Calu3 (cell line): ENCODE measurements at regions of chr15 and their contacts with region 1.

Region 1: DNA sequence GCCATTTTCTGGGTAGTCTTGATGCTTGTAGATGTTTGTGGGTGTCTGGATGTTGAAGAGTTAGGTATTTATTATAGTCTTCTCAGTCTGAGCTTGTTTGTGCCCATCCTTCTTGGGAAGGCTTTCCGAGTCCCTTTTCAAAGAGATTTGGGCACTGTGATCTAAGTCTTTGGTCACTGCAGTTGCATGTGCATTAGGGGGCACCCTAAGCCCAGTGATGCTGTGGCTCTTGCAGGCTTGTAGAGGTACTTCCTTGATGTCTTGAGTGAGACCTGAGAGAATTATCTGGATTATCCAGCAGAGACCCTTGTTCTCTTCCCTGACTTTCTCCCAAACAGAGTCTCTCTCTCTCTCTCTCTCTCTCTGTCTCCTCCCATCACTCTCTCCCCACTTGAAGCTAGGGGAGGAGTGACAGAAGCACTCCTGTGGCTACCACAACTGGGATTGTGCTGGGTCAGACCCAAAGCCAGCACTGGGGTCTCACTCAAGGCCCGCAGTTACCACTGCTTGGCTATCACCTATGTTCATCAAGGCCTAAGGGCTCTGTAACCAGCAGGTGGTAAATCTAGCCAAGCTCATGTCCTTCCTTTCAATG is 68.5 kb downstream of the TMCO5A start:
- DNase-seq: peak; percentile 62
- H3K4me3 Mint-ChIP-seq: no peak overlapping the region
- H3K27ac Mint-ChIP-seq: no peak overlapping the region
- H3K4me1 Mint-ChIP-seq: no peaks in the 10 kb centered on the region
- H3K27me3 Mint-ChIP-seq: no peaks in the 10 kb centered on the region
- CTCF ChIP-seq: peak; percentile 18

Region 2: GRCh38 chr15:38252481-38253412 is 249.8 kb after region 1 on chr15 and contains the start of gene SPRED1:
- CTCF ChIA-PET with region 1: interaction called, 5 read pairs
- intact Hi-C with region 1: loop called (anchors 5 kb)
- DNase-seq: peak; percentile 54
- H3K4me3 Mint-ChIP-seq: peak within 1 kb of the TSS; percentile 78
- H3K27ac Mint-ChIP-seq: peak within 1 kb of the TSS; percentile 91
- H3K4me1 Mint-ChIP-seq: no peaks in the 10 kb centered on the region
- H3K27me3 Mint-ChIP-seq: no peaks in the 10 kb centered on the region
- CTCF ChIP-seq: no peak
- total RNA-seq, gene SPRED1: 16.1 and 16.4 TPM in 2 replicates

Region 3: DNA sequence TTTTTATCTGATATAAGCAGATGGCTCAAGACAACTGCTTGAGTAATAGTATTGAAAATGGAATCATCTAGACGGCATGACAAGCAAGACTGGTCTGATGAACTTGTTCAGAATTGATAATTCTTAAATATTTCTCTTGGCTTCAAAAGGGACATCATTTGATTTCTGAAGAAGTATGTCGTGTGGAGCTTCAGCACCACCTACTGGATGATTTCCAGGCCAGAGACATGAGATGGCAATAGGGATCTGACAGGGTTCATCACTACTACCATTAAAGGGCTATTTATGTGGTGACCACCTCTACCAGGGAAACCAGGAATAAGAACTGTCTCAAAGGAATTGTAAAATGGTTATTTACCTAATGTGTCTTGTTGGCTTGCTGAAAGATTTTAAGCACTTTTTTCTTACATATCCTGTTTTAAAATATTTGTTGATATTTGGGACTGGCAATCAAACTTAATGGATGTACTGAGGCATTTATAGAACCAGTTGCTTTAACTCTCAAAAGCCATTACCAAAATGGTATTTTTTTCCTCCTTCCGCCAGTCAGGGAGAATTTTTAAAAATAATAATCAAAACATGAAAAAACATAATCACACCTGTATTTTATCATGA is 351.4 kb after region 1 on chr15:
- CTCF ChIA-PET with region 1: no interaction called
- intact Hi-C with region 1: loop called (anchors 1 kb)
- DNase-seq: peak; percentile 45
- H3K4me3 Mint-ChIP-seq: no peak overlapping the region
- H3K27ac Mint-ChIP-seq: no peak overlapping the region
- H3K4me1 Mint-ChIP-seq: no peaks in the 10 kb centered on the region
- H3K27me3 Mint-ChIP-seq: no peaks in the 10 kb centered on the region
- CTCF ChIP-seq: no peak

Region 4: DNA sequence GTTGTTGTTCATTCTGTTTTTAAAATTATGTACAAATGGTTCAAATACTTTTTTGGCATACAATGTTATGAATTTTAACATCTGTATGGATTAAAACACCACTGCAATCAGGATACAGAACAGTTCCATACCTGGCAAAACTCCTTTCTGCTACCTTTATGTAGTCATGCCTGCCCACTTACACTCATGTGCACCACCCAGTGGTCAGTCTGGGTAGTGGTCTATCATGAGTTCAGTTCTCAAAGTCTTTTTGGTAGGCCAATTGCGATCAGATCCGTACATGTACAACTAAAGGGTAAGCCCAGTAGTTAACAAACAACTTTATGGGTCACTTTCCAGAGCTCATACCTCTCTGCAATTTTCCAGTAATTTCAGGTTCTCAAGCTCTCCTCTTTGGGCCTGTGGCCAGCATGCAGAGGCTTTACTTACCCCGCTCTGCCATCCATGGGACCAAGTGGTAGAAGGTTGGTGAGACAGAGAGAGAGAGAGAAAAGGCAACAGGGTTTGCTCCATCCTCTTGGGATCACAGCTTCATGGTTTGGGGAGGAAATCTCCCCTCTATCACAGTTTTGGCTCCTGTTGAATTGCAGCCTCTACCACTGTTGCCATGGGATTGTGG is 387.1 kb after region 1 on chr15:
- CTCF ChIA-PET with region 1: interaction called, 3 read pairs
- intact Hi-C with region 1: loop called (anchors 2 kb)
- DNase-seq: peak; percentile 71
- H3K4me3 Mint-ChIP-seq: no peak overlapping the region
- H3K27ac Mint-ChIP-seq: no peak overlapping the region
- H3K4me1 Mint-ChIP-seq: no peaks in the 10 kb centered on the region
- H3K27me3 Mint-ChIP-seq: peaks cover 8% of the 10 kb centered on the region
- CTCF ChIP-seq: peak; percentile 41

Region 5: DNA sequence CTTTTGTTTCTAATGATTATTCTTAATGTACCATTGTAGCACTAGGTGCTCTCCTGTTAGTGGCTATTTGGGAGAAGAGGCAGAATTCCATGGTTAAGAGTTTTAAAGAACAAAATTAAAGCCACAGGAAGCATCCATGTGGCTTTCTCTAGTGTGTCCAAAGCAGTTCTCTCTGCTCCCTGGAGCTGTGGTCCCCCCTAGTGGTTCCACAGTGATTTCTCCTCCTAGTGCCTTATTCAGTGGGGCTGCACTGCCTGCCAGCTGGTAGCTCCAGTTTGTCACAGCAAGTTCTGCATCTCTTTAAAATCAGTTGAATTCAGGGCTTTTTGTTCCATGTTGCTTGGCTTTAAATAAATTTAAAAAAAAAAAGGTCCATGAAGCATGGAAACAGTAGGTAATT is 411.4 kb after region 1 on chr15:
- CTCF ChIA-PET with region 1: no interaction called
- intact Hi-C with region 1: loop called (anchors 1 kb)
- DNase-seq: peak; percentile 55
- H3K4me3 Mint-ChIP-seq: no peak overlapping the region
- H3K27ac Mint-ChIP-seq: no peak overlapping the region
- H3K4me1 Mint-ChIP-seq: no peaks in the 10 kb centered on the region
- H3K27me3 Mint-ChIP-seq: peaks cover 30% of the 10 kb centered on the region
- CTCF ChIP-seq: no peak

Region 6: DNA sequence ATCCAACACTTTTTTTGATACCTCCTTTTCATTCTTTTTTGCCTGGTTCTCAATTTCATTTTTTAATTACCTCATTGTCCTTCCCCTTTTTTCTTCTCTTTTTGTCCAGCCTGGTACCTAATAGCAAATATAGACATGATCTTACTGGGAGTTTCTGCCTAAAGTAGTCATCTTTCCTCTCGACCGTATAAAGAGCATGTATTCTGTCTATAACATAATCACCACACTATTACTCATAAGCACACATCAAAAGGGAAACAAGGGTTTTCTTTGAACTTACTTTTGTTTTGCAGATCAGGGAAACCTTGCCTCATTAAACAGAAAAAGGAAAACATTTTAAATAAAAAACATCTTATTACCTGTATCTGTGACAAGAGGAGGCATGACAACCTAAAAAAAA is 484.0 kb after region 1 on chr15:
- CTCF ChIA-PET with region 1: no interaction called
- intact Hi-C with region 1: no loop called
- DNase-seq: no peak
- H3K4me3 Mint-ChIP-seq: no peak overlapping the region
- H3K27ac Mint-ChIP-seq: no peak overlapping the region
- H3K4me1 Mint-ChIP-seq: no peaks in the 10 kb centered on the region
- H3K27me3 Mint-ChIP-seq: no peaks in the 10 kb centered on the region
- CTCF ChIP-seq: no peak